Activated naive CD4-positive, alpha-beta T cell treated with anti-CD3 and anti-CD28 coated beads, Interleukin-2, amount 10 ng/mL, durations not matched to agents 7 days and 5 days (primary cell): ENCODE measurements at regions of chr4 and their contacts with region 1.

Region 1: DNA sequence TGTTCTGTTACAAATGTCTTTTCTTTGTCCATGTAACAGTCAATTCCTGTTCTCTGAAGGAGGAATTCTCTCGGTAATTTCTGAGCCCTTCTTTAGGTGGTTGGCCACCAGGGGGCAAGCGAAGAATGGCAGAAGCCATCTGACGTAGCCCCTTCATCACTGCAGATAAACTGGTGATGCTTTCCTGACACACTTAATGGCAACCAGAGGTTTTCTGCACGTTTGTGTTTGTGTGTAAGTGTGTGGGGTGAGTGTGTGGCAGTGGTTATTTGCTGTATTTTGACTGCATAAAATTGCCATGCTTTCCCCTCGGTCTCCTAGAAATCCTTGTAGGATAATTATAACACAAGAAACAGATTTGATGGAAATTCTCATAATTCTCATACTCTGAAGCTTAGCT is 64.8 kb upstream of the STOX2 start:
- DNase-seq: peak; percentile 77
- H3K4me3 Mint-ChIP-seq: no peak overlapping the region
- H3K27ac Mint-ChIP-seq: no peak overlapping the region
- H3K4me1 Mint-ChIP-seq: no peaks in the 10 kb centered on the region
- H3K27me3 Mint-ChIP-seq: peaks cover 10% of the 10 kb centered on the region

Region 2: DNA sequence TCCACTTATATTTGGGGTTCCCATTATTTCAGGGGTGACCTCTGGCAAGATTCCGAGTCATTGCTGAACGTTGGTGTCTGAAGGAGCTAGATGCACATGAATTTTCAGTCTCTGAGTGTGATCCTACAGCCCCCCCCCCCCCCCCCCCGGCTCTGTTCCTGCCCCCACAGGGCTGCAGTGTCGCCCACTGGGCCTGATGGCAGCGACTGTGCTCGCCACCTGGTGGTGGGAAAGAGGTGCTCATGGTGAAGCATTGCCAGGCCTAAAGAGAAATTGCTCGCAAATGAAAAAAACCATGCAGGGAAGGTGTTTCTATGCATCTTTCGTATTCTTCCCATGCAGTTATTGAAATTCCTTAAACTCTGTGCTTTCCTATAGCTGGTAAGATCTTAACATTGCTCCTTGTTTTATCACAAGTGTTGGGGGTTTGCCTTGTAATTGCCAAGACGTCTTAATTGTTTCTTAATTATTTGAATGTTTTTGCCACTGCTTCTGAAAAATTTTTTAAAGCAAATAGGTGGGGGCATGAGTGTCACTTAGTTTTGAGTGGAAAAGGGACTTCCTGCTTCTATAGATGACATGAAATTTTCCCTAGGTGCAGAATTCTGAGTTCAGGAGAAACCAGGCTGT is 583.4 kb before region 1 on chr4:
- CTCF ChIA-PET with region 1: no interaction called
- DNase-seq: peak; percentile 58
- H3K4me3 Mint-ChIP-seq: no peak overlapping the region
- H3K27ac Mint-ChIP-seq: no peak overlapping the region
- H3K4me1 Mint-ChIP-seq: no peaks in the 10 kb centered on the region
- H3K27me3 Mint-ChIP-seq: no peaks in the 10 kb centered on the region

Region 3: GRCh38 chr4:183700404-183700803 is 139.9 kb before region 1 on chr4:
- CTCF ChIA-PET with region 1: no interaction called
- DNase-seq: no peak
- H3K4me3 Mint-ChIP-seq: no peak overlapping the region
- H3K27ac Mint-ChIP-seq: no peak overlapping the region
- H3K4me1 Mint-ChIP-seq: no peaks in the 10 kb centered on the region
- H3K27me3 Mint-ChIP-seq: no peaks in the 10 kb centered on the region

Region 4: GRCh38 chr4:183808097-183808456 is 32.2 kb before region 1 on chr4:
- CTCF ChIA-PET with region 1: no interaction called
- DNase-seq: no peak
- H3K4me3 Mint-ChIP-seq: no peak overlapping the region
- H3K27ac Mint-ChIP-seq: no peak overlapping the region
- H3K4me1 Mint-ChIP-seq: no peaks in the 10 kb centered on the region
- H3K27me3 Mint-ChIP-seq: peaks cover 23% of the 10 kb centered on the region

Region 5: DNA sequence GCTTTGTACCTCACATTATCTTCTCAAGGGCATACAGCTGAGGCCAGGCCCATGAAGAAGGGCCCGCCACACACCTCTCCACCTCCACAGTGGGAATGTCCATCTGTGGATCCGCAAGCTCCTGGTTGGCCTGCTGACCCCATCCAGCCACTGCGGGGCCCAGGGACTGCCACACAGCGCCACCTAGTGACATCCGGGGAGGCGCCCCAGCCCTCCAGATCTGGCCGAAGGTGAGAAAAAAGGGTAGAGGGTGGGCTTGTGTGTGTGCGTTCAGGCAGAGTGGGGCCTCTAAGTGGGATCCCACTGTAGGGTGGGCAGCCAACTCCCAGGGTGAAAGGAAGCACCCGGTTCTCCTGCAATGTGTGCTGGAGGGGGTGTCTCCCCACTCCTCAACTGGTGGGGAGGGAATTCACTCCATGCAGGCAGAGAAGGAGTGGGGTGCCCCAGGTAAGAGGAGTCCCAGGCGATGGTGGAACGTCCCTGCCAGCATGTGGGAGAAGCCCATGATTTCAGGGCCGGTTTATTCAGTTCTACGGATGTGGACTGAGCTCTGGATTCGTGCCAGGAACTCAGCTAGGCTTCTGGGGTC is 260.1 kb after region 1 on chr4:
- CTCF ChIA-PET with region 1: interaction called, 10 read pairs
- DNase-seq: peak; percentile 46
- H3K4me3 Mint-ChIP-seq: no peak overlapping the region
- H3K27ac Mint-ChIP-seq: no peak overlapping the region
- H3K4me1 Mint-ChIP-seq: peaks cover 6% of the 10 kb centered on the region
- H3K27me3 Mint-ChIP-seq: peaks cover 37% of the 10 kb centered on the region

Region 6: DNA sequence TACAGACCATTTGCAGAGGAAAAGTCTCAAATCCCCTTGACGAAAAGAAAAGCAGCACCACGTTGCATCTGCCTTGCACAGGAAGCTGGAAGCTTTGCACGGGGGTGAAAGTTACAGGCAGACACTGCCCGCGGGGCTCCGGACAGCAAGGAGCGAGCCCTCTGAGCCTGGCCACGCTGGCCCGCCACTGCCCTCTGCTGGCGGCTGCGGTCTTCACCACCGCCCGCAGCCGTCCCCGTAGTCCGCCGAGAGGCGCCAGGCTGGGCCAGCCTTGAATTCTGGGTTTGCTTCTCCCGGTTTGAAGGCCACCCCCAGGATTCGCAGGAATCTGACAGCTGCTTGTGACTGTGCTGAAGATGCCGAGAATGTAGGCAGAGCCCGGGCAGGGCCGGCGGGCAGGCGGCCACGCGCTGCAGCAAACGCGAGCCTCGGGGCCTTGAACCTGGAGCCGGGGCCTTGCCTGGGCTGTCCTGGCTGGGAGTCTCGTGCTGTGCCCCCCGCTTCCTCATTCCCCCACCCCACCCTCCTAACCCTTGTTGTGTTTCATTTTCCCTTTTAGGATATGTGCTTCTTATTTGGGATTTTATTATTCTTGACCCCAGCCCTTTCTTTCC is 328.2 kb after region 1 on chr4:
- CTCF ChIA-PET with region 1: interaction called, 10 read pairs
- DNase-seq: peak; percentile 66
- H3K4me3 Mint-ChIP-seq: no peak overlapping the region
- H3K27ac Mint-ChIP-seq: no peak overlapping the region
- H3K4me1 Mint-ChIP-seq: peaks cover 4% of the 10 kb centered on the region
- H3K27me3 Mint-ChIP-seq: peaks cover 61% of the 10 kb centered on the region